Head of caudate nucleus (tissue), 42 donors: ENCODE measurements at regions of chr11 and their contacts with region 1.

Region 1: GRCh38 chr11:86068951-86069407 is at the start of gene PICALM:
- DNase-seq: peak; percentile 94 to 100 (median 98)

Region 2: GRCh38 chr11:85791409-85791990 is 277.5 kb before region 1 on chr11:
- intact Hi-C with region 1: no loop called
- DNase-seq: no peak

Region 3: DNA sequence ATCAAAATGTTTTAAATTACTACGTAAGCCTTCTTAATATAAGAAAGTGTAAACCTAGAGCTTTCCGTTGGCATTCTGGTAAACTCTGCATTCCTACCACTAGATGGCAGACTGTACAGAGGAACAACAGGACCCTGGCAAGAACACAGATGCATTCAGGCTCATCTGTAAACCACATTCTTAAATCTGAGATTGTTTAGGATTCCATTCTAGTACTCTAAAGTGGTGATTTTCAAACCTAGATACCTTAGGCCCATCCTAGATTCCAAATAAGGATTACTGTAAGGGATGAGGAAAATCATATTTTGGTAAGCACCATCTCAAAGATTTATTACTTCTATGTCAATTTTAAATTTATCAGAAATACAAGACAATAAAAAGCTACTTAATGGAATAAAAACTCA is 27.0 kb before region 1 on chr11:
- intact Hi-C with region 1: loop called (anchors 2 kb)
- DNase-seq: peak in 30 of 42 donors; percentile 12 to 87 (median 66)

Region 4: DNA sequence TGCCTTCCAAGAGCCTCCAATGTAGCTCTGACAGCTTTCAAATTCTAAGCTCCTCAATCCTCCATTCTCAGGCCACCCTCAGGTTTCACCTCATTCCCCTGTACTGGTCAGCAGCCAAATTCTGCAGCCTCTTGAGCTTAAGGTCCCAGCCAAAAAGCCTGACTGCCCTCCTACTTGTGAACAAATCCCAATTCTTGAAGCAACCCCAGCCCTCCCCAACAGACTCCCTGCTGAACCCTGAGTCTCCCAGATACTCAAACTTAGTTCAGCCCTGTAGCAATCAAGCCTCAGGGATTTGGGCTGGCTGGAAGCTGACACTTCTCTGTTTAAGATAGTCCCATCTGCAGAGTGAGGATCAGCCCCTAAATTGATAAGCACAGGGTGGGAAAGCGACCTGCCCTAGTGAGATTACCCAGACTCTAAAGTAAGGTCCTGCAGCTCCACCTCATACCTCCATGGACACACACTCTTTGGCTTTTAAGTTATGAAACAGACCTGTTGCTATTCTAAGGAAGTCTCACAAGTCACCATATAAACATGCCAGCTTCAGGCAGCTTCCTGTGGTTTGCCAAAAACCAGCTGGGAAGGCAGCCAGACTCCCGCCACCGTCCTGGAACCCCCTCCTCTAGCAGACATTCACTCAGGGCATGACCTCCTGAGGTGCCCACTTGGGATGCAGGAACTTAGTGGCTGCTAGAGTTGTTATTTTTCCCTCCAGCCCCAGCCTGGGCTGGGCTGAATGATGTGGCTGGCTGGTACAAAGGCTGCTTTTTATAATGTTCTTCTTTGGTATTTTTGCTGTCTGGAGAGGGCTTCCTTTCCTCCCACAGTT is 82.4 kb after region 1 on chr11:
- intact Hi-C with region 1: loop called (anchors 2 kb)
- DNase-seq: peak; percentile 28 to 85 (median 60)